Activated CD8-positive, alpha-beta T cell treated with anti-CD3 and anti-CD28 coated beads for 36 hours (primary cell): ENCODE measurements at regions of chrX and their contacts with region 1.

Region 1: DNA sequence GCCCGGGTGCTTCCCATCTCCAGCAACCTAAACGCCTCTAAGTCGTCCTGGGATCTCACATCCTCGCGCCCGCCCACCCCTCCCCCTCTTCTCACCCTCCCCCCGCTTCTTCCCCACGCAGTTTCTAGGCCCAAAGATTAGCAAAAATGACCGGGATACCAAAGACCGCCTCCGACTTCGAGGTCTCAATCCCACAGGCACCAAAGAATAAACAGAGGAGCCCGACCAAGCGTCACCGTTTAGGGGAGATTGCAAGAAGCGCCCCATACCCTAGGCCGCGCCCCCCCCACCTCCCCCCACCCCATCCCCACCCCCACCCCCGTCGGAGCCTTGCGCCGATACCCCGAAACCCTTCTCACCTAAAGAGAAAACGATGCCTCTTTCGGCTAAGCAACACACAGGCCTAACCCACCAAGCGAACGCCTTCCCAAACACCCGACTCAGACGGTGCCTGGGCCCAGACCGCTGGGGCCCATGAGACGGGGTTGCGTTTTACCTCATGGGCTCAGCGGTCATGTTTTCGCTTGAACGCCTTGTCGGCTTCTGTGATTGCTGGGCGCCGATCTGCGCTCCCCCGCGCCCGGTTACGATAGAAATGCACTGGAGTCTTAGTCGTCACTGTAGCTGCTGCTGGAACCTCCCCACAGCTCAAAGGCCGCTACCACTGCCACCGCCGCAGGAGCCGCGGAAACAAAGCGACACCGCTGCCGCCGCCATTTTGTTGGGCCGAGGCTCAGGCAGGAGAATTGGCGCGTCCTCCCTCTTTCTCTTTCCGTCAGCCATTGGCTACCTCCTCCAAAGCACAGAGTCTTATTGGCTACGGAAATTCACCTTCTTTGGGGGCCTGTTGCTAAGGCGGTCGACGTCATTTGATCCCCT is at the start of gene ATRX:
- DNase-seq: peak; percentile 82
- ATAC-seq: peak; percentile 94
- H3K4me3 Mint-ChIP-seq: peak within 1 kb of the TSS; percentile 95
- H3K27ac Mint-ChIP-seq: peak within 1 kb of the TSS; percentile 100
- H3K4me1 Mint-ChIP-seq: peaks cover 28% of the 10 kb centered on the region
- H3K27me3 Mint-ChIP-seq: no peaks in the 10 kb centered on the region
- CTCF ChIP-seq: no peak
- total RNA-seq, gene ATRX: 51.6 to 60.9 TPM

Region 2: DNA sequence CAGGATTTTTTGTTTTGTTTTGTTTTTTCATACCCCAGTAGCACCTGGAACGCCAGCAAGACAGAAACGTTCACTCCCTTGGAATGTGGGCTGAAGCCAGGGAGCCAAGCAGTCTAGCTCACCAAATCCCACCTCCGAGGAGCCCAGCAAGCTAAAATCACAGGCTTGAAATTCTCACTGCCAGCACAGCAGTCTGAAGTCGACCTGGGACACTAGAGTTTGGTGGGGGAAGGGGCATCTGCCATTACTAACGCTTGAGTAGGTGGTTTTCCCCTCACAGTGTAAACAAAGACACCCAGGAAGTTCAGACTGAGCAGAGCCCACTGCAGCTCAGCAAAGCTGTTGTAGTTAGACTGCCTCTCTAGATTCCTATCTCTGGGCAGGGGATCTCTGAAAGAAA is 438.2 kb before region 1 on chrX:
- CTCF ChIA-PET with region 1: no interaction called
- POLR2A ChIA-PET with region 1: no interaction called
- intact Hi-C with region 1: no loop called
- DNase-seq: no peak
- ATAC-seq: no peak
- H3K4me3 Mint-ChIP-seq: no peak overlapping the region
- H3K27ac Mint-ChIP-seq: no peak overlapping the region
- H3K4me1 Mint-ChIP-seq: no peaks in the 10 kb centered on the region
- H3K27me3 Mint-ChIP-seq: no peaks in the 10 kb centered on the region
- CTCF ChIP-seq: no peak

Region 3: GRCh38 chrX:77719388-77719787 is 66.3 kb before region 1 on chrX:
- CTCF ChIA-PET with region 1: no interaction called
- POLR2A ChIA-PET with region 1: no interaction called
- intact Hi-C with region 1: loop called (anchors 10 kb)
- DNase-seq: no peak
- ATAC-seq: no peak
- H3K4me3 Mint-ChIP-seq: no peak overlapping the region
- H3K27ac Mint-ChIP-seq: peak overlapping the region; percentile 38
- H3K4me1 Mint-ChIP-seq: peaks cover 35% of the 10 kb centered on the region
- H3K27me3 Mint-ChIP-seq: no peaks in the 10 kb centered on the region
- CTCF ChIP-seq: no peak

Region 4: DNA sequence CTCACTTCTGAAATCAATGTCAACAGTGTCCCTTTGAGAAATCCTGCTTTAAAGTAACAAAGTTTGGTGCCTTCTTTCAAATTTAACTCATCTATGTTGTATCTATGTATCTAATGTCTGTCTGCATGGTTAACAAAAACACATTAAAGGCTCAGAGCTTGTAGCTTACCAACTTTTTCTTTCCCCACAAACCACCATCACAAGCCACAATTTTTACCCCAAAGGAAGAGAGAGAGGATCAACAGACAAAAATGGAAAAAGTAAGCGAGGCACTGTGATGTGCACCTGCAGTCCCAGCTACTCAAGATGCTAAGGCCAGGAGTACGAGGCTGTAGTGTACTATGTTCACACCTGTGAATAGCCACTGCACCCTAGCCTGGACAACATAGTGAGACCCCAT is 16.9 kb before region 1 on chrX:
- CTCF ChIA-PET with region 1: no interaction called
- POLR2A ChIA-PET with region 1: no interaction called
- intact Hi-C with region 1: no loop called
- DNase-seq: no peak
- ATAC-seq: no peak
- H3K4me3 Mint-ChIP-seq: no peak overlapping the region
- H3K27ac Mint-ChIP-seq: peak overlapping the region; percentile 41
- H3K4me1 Mint-ChIP-seq: peaks cover 26% of the 10 kb centered on the region
- H3K27me3 Mint-ChIP-seq: no peaks in the 10 kb centered on the region
- CTCF ChIP-seq: no peak

Region 5: DNA sequence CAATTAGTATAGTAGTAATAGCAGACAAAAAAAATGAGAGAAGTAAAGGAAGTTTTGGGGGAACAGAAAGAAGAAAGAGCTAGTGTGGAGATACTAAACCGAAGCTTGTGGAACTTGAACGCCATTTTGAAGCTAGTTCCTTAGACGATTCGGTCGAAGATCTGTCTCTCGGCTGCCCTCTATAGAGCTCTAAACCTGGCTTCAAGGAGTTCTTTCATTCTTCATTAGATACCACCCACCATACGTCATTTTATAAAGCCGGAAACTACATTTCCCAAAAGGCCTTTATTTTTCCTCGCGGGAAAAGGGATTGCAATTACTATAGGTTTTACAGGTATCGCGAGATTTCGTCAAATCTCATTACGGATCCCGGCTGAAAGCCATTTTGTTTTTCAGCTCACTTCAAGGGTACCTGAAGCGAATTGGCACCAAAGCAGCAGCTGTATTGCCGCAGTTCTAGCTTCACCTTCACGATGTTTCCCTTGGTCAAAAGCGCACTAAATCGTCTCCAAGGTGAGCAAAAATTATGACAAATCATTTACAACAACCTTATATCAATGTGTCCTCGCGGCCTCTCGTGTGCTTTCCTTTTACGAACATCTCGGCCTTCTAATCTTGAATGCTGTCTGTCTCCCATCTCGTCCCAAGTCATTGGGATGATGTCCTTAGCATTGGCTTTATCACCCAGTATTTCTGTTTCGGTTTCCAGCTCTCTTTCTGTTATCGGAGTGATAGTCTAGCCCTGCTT is 113.5 kb after region 1 on chrX and contains the start of gene COX7B:
- CTCF ChIA-PET with region 1: no interaction called
- POLR2A ChIA-PET with region 1: no interaction called
- intact Hi-C with region 1: loop called (anchors 10 kb)
- DNase-seq: peak; percentile 73
- ATAC-seq: peak; percentile 74
- H3K4me3 Mint-ChIP-seq: peak within 1 kb of the TSS; percentile 94
- H3K27ac Mint-ChIP-seq: peak within 1 kb of the TSS; percentile 97
- H3K4me1 Mint-ChIP-seq: peaks cover 18% of the 10 kb centered on the region
- H3K27me3 Mint-ChIP-seq: no peaks in the 10 kb centered on the region
- CTCF ChIP-seq: peak; percentile 38
- total RNA-seq, gene COX7B: 302 to 324 TPM

Region 6: GRCh38 chrX:77925764-77926163 is 140.0 kb after region 1 on chrX:
- CTCF ChIA-PET with region 1: no interaction called
- POLR2A ChIA-PET with region 1: no interaction called
- intact Hi-C with region 1: no loop called
- DNase-seq: no peak
- ATAC-seq: no peak
- H3K4me3 Mint-ChIP-seq: no peak overlapping the region
- H3K27ac Mint-ChIP-seq: no peak overlapping the region
- H3K4me1 Mint-ChIP-seq: peaks cover 9% of the 10 kb centered on the region
- H3K27me3 Mint-ChIP-seq: no peaks in the 10 kb centered on the region
- CTCF ChIP-seq: no peak